B cell (primary cell): ENCODE measurements at regions of chr13 and their contacts with region 1.

Region 1: GRCh38 chr13:51814825-51815650 is 11.1 kb upstream of the DHRS12 start:
- DNase-seq: peak; percentile 89
- ATAC-seq: peak; percentile 89
- H3K4me3 ChIP-seq: peak overlapping the region in 3 of 5 experiments; percentile 19 to 30 (median 20)
- H3K4me3 Mint-ChIP-seq: peak overlapping the region; percentile 7
- H3K27ac ChIP-seq: no peak overlapping the region
- H3K27ac Mint-ChIP-seq: peak overlapping the region; percentile 73
- H3K4me1 ChIP-seq: peaks cover 22 to 25% of the 10 kb centered on the region in 2 donors
- H3K4me1 Mint-ChIP-seq: peaks cover 32% of the 10 kb centered on the region
- H3K27me3 ChIP-seq: no peaks in the 10 kb centered on the region
- H3K27me3 Mint-ChIP-seq: no peaks in the 10 kb centered on the region
- CTCF ChIP-seq: peak; percentile 88

Region 2: DNA sequence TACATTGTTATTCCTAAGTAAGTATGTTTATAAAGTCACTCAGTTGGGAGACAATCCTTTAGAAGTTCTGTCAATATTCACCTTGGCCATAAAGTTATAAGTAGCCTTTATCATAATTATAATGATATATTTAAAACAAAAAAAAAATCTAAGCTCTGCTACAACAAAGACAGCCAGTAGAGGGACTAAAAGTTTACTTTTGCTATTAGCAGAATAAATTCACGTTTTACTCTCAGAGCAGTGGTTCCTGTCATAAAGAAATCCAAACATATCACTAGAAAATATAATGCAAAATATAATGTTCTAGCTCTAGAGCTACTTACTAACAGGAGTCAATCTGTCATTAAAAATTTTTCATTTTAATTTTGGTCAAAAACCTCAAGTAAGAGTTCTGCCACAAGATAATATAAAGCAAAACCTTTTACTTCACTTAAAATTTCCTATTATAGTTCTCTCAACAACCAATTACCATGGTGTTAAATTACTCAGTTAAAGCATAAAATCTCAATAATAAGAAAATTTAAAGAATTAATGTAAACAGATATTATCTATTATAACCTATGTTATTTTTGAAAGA is 379.9 kb before region 1 on chr13:
- CTCF ChIA-PET with region 1: interaction called, 16 read pairs
- POLR2A ChIA-PET with region 1: no interaction called
- intact Hi-C with region 1: no loop called
- DNase-seq: peak; percentile 50
- ATAC-seq: no peak
- H3K4me3 ChIP-seq: no peak overlapping the region
- H3K4me3 Mint-ChIP-seq: no peak overlapping the region
- H3K27ac ChIP-seq: no peak overlapping the region
- H3K27ac Mint-ChIP-seq: no peak overlapping the region
- H3K4me1 ChIP-seq: no peaks in the 10 kb centered on the region
- H3K4me1 Mint-ChIP-seq: peaks cover 7% of the 10 kb centered on the region
- H3K27me3 ChIP-seq: no peaks in the 10 kb centered on the region
- H3K27me3 Mint-ChIP-seq: no peaks in the 10 kb centered on the region
- CTCF ChIP-seq: peak; percentile 86

Region 3: GRCh38 chr13:51721496-51721895 is 93.5 kb before region 1 on chr13:
- CTCF ChIA-PET with region 1: no interaction called
- POLR2A ChIA-PET with region 1: no interaction called
- intact Hi-C with region 1: no loop called
- DNase-seq: no peak
- ATAC-seq: no peak
- H3K4me3 ChIP-seq: no peak overlapping the region
- H3K4me3 Mint-ChIP-seq: no peak overlapping the region
- H3K27ac ChIP-seq: peak overlapping the region in 1 of 2 donors; percentile 21
- H3K27ac Mint-ChIP-seq: no peak overlapping the region
- H3K4me1 ChIP-seq: peaks cover 0 to 3% of the 10 kb centered on the region in 2 donors
- H3K4me1 Mint-ChIP-seq: peaks cover 11% of the 10 kb centered on the region
- H3K27me3 ChIP-seq: no peaks in the 10 kb centered on the region
- H3K27me3 Mint-ChIP-seq: no peaks in the 10 kb centered on the region
- CTCF ChIP-seq: no peak

Region 4: DNA sequence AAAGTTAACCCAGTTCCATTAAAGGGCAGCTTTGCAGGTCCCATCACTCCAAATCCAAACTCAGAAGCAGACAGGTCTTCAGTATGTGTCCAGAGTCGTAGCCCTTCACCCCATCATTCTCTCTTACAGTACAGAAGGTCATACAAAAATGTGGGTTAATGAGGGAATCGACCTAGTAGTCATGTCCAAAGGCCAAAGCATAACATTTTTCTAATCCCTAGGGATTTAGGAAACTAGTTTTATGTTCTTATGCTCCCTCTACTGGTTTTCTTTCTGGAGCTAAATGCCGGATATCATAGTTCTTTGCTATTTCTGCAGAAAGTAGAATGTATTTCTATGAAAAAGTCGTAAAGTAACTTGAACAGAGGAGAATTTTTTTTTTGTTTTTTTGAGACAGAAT is 83.3 kb before region 1 on chr13:
- CTCF ChIA-PET with region 1: no interaction called
- POLR2A ChIA-PET with region 1: no interaction called
- intact Hi-C with region 1: no loop called
- DNase-seq: no peak
- ATAC-seq: no peak
- H3K4me3 ChIP-seq: no peak overlapping the region
- H3K4me3 Mint-ChIP-seq: no peak overlapping the region
- H3K27ac ChIP-seq: no peak overlapping the region
- H3K27ac Mint-ChIP-seq: no peak overlapping the region
- H3K4me1 ChIP-seq: no peaks in the 10 kb centered on the region
- H3K4me1 Mint-ChIP-seq: peaks cover 3% of the 10 kb centered on the region
- H3K27me3 ChIP-seq: no peaks in the 10 kb centered on the region
- H3K27me3 Mint-ChIP-seq: no peaks in the 10 kb centered on the region
- CTCF ChIP-seq: no peak

Region 5: DNA sequence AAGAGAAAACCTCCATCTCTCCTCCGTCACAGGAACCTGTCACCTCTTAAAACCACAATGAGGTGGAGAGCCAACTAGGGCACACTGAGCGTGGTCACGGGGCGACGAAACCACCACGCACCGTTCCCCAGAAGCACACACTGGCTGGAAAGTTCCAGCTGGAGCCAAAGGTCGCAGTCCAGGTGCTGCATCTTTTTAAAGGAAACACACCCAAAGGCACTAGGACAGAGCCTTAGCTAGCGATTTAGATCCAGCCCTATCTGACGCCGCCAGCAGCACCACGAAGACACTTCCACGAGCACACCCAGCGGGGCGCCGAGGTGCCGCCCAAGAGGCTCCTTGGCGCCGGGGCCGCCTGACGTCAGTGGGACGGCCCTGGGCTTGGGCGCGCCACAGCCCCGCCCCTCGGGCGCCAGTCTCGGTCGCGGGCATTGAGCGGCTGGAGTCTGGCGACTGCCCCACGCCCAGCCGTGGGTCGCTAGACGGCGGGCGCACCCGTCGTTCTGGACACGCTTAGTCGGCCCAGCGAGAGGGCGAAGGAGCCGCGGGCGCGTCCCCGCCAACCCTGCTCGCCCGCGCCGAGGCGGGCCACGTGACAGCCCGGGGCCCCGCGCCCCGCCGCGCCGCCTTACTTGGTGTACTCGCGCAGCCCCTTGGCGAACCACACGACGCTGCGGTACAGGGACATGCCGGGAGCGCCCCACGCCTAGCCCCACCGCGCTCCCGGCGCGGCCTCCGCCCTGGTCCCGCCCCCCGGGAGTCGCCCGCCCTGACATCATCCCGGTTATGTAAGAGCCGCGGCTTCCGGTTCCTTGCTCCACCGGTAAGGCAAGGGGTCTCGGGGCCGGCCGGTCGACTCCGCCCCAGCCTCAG is 11.4 kb before region 1 on chr13 and contains the start of gene DHRS12:
- CTCF ChIA-PET with region 1: interaction called, 21 read pairs
- POLR2A ChIA-PET with region 1: interaction called, 3 read pairs
- intact Hi-C with region 1: no loop called
- DNase-seq: peak; percentile 95
- ATAC-seq: peak; percentile 84
- H3K4me3 ChIP-seq: peak within 1 kb of the TSS; percentile 64 to 94 (median 72)
- H3K4me3 Mint-ChIP-seq: peak within 1 kb of the TSS; percentile 99
- H3K27ac ChIP-seq: peak within 1 kb of the TSS; percentile 98
- H3K27ac Mint-ChIP-seq: peak within 1 kb of the TSS; percentile 100
- H3K4me1 ChIP-seq: peaks cover 19 to 27% of the 10 kb centered on the region in 2 donors
- H3K4me1 Mint-ChIP-seq: peaks cover 38% of the 10 kb centered on the region
- H3K27me3 ChIP-seq: no peaks in the 10 kb centered on the region
- H3K27me3 Mint-ChIP-seq: no peaks in the 10 kb centered on the region
- CTCF ChIP-seq: no peak
- total RNA-seq, gene DHRS12: 23.2 TPM in 2 replicates

Region 6: GRCh38 chr13:51832471-51833152 is 17.6 kb after region 1 on chr13:
- CTCF ChIA-PET with region 1: interaction called, 125 read pairs
- POLR2A ChIA-PET with region 1: interaction called, 6 read pairs
- intact Hi-C with region 1: loop called (anchors 1 kb)
- DNase-seq: peak; percentile 65
- ATAC-seq: peak; percentile 94
- H3K4me3 ChIP-seq: no peak overlapping the region
- H3K4me3 Mint-ChIP-seq: peak overlapping the region; percentile 37
- H3K27ac ChIP-seq: no peak overlapping the region
- H3K27ac Mint-ChIP-seq: no peak overlapping the region
- H3K4me1 ChIP-seq: peaks cover 7 to 29% of the 10 kb centered on the region in 2 donors
- H3K4me1 Mint-ChIP-seq: peaks cover 39% of the 10 kb centered on the region
- H3K27me3 ChIP-seq: peaks cover 0 to 8% (median 0%) of the 10 kb centered on the region in 4 experiments
- H3K27me3 Mint-ChIP-seq: peaks cover 22% of the 10 kb centered on the region
- CTCF ChIP-seq: peak; percentile 39

Region 7: DNA sequence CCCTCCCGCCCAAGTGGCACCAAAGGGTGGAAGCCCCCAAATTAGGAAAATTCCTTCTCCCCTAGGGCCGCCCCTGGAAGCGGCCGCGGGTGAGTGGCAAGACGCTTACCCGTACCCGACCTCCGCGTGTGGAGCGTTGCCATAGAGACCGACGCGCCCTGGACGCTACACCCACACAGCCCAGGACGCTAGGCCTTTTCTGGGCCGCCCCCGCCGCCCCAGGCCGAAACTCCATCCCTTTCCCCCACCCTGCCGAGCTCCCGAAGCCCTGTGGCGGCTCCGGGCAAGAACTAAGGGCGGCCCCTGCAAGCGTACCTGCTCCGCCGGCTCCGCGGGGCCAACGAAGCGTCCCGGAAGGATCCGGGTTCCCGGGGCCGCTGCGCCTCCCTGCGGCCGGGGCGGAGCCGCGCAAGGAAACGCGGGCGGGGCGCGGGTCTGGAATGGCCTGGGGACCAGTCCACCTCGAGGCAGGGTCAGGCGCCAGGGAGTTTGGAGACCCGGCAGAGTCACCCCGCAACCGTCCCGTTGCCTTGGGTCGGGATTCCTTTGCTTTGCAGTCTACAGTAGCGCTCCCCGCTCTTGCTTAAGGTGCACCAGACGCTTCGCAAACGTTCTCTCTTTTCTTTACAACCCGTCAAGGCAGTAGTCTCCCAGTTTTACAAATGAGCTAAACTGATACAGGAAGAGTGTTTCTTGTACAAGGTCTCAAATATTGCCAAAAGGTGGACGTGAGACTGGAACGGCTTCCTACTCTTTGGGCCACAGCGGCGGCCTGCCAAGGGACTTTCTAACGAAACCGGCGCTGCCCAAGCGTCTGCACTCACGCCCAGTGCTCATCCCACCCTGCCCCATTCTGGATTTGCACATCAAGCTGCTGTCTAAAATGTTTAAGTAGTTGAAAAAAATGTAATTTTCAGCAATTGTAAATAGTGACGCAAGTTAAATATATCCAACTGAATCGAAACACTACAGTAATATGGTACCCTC is 314.0 kb after region 1 on chr13 and contains the start of gene NEK5:
- CTCF ChIA-PET with region 1: interaction called, 42 read pairs
- POLR2A ChIA-PET with region 1: no interaction called
- intact Hi-C with region 1: loop called (anchors 1 kb)
- DNase-seq: peak; percentile 64
- ATAC-seq: peak; percentile 66
- H3K4me3 ChIP-seq: peak within 1 kb of the TSS; percentile 50 to 67 (median 61)
- H3K4me3 Mint-ChIP-seq: peak within 1 kb of the TSS; percentile 86
- H3K27ac ChIP-seq: no peak within 1 kb of the TSS
- H3K27ac Mint-ChIP-seq: no peak within 1 kb of the TSS
- H3K4me1 ChIP-seq: peaks cover 17 to 18% of the 10 kb centered on the region in 2 donors
- H3K4me1 Mint-ChIP-seq: peaks cover 16% of the 10 kb centered on the region
- H3K27me3 ChIP-seq: peaks cover 0 to 25% (median 16%) of the 10 kb centered on the region in 4 experiments
- H3K27me3 Mint-ChIP-seq: peaks cover 21% of the 10 kb centered on the region
- CTCF ChIP-seq: peak; percentile 67
- total RNA-seq, gene NEK5: not detected in 2 replicates